Dendritic cell treated with granulocyte-macrophage colony-stimulating factor and Interleukin-4, amounts not matched to agents 40 ng/mL and 50 ng/mL, for 4 days (primary cell): ENCODE measurements at regions of chr12 and their contacts with region 1.

Region 1: DNA sequence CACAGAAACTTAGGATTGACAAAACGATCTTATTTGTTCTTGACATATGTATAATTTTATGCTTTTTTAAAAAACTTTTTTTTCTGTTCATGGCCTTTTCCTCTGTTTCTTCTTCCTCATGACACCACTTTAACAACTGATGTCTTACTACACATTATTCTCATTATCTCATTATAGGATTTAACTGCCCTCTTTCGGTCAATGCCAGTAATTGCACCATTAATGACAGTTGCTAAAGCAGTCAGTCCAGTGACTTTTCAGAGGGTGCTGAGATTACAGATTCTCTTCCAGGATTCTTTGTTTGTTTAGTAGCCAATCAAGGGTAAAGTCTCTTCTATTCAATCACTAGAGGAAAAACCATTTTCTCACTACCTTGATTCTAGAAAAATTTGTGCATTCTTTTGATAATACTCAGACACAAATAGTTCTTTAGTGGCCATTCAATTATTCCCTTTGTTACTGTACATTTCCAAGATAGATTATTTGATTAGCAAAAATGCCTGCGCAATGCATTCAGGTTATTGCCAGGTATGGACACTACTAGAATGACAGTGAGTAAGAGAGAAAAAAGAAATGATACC is 50.1 kb downstream of the KLRG1 start:
- H3K4me3 Mint-ChIP-seq: no peak overlapping the region
- H3K27ac Mint-ChIP-seq: no peak overlapping the region
- H3K4me1 Mint-ChIP-seq: no peaks in the 10 kb centered on the region
- H3K27me3 Mint-ChIP-seq: peaks cover 4% of the 10 kb centered on the region

Region 2: DNA sequence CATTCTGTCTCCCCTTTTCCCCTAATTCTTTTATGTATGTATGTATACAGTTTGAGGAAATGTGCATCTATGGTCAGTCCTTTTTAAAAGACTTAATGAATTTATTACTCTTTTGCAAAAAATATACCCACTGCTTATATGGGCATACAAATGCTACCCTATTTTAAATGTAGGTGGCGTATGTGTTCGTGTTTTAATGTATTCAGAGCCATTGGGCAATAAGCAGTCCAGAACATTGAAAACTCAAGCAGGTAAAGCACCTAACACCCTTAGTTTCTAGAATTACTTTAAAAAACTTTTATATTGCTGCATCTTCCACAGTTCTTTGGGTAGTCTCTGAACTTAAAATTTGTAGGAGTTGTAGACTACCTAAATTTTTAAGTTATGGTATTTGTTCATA is 259.6 kb before region 1 on chr12:
- intact Hi-C with region 1: loop called (anchors 5 kb)
- H3K4me3 Mint-ChIP-seq: no peak overlapping the region
- H3K27ac Mint-ChIP-seq: no peak overlapping the region
- H3K4me1 Mint-ChIP-seq: no peaks in the 10 kb centered on the region
- H3K27me3 Mint-ChIP-seq: no peaks in the 10 kb centered on the region